A673 (cell line): ENCODE measurements at regions of chr3 and their contacts with region 1.

Region 1: GRCh38 chr3:179322286-179323196 is at the start of gene ZNF639:
- DNase-seq: peak; percentile 94
- H3K4me3 ChIP-seq: peak within 1 kb of the TSS; percentile 95
- H3K27ac ChIP-seq: peak within 1 kb of the TSS; percentile 95
- H3K4me1 ChIP-seq: peaks cover 11% of the 10 kb centered on the region
- H3K27me3 ChIP-seq: no peaks in the 10 kb centered on the region
- CTCF ChIP-seq: peak; percentile 67
- total RNA-seq, gene ZNF639: 46.8 and 47.4 TPM in 2 replicates

Region 2: GRCh38 chr3:178436773-178437172 is 885.8 kb before region 1 on chr3:
- CTCF ChIA-PET with region 1: no interaction called
- POLR2A ChIA-PET with region 1: interaction called, 3 read pairs
- intact Hi-C with region 1: loop called (anchors 5 kb)
- DNase-seq: peak; percentile 65
- H3K4me3 ChIP-seq: no peak overlapping the region
- H3K27ac ChIP-seq: no peak overlapping the region
- H3K4me1 ChIP-seq: peaks cover 24% of the 10 kb centered on the region
- H3K27me3 ChIP-seq: no peaks in the 10 kb centered on the region
- CTCF ChIP-seq: peak; percentile 77

Region 3: GRCh38 chr3:178966299-178967176 is 356.0 kb before region 1 on chr3:
- CTCF ChIA-PET with region 1: no interaction called
- POLR2A ChIA-PET with region 1: no interaction called
- intact Hi-C with region 1: loop called (anchors 1 kb)
- DNase-seq: peak; percentile 89
- H3K4me3 ChIP-seq: peak overlapping the region; percentile 17
- H3K27ac ChIP-seq: peak overlapping the region; percentile 89
- H3K4me1 ChIP-seq: peaks cover 32% of the 10 kb centered on the region
- H3K27me3 ChIP-seq: no peaks in the 10 kb centered on the region
- CTCF ChIP-seq: peak; percentile 75

Region 4: DNA sequence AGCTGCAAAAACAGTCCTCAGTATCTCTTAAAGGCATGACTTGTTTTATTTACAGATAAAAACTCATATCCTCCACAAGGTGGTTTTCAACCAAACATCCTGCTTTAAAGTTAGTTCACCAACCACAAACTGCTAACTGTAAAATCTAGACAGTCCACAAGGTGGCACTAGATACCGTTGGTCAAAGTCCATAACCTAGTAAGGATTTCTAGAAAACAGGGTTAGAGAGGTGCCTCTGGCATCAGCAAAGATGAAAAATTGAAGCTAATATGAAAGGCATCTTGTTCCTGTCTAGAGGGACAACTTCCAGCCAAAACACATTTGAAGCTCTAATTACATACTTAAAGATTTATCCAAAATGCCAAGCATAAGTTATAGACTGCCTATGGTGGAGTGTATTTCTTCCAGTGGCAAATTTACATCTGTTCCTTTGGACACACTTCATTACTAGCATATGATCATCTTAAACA is 307.0 kb before region 1 on chr3:
- CTCF ChIA-PET with region 1: interaction called, 4 read pairs
- POLR2A ChIA-PET with region 1: no interaction called
- intact Hi-C with region 1: loop called (anchors 1 kb)
- DNase-seq: peak; percentile 86
- H3K4me3 ChIP-seq: no peak overlapping the region
- H3K27ac ChIP-seq: no peak overlapping the region
- H3K4me1 ChIP-seq: peaks cover 29% of the 10 kb centered on the region
- H3K27me3 ChIP-seq: no peaks in the 10 kb centered on the region
- CTCF ChIP-seq: peak; percentile 87

Region 5: GRCh38 chr3:179108086-179108485 is 214.5 kb before region 1 on chr3:
- CTCF ChIA-PET with region 1: no interaction called
- POLR2A ChIA-PET with region 1: no interaction called
- intact Hi-C with region 1: loop called (anchors 2 kb)
- DNase-seq: no peak
- H3K4me3 ChIP-seq: no peak overlapping the region
- H3K27ac ChIP-seq: no peak overlapping the region
- H3K4me1 ChIP-seq: no peaks in the 10 kb centered on the region
- H3K27me3 ChIP-seq: no peaks in the 10 kb centered on the region
- CTCF ChIP-seq: no peak

Region 6: DNA sequence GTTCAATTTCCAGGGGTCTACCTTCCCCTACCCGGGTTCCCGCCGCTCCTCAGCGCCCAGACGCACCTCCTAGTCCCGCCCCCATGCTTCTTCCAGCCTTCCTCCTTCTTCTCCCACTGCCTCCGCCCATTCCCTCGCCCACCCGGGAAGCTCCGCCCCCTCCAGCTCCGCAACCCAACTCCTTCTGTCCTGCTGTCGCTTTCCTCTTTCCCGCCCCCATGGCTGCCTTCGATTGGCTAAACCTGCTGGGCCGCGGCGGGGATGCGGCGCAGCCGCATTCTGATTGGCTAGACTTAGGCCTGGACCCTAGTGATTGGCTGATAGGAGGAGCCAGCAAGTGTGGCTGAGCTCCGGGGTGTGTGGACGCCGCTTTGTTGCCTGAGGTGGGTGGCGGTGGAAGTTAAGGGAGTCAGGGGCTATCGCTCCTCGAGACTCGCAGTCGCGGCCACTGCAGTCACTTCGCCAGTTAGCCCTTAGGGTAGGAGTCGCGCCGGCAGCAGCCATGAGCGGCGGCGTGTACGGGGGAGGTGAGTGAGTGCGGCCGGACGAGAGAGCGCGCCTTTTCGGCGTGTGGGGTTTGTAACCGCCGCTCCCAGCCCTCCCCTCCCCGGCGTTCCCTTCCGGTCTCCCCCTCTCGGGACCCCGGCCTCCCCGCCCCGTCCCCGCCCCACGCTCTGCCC is 240.2 kb after region 1 on chr3 and contains the start of gene ACTL6A:
- CTCF ChIA-PET with region 1: no interaction called
- POLR2A ChIA-PET with region 1: no interaction called
- intact Hi-C with region 1: loop called (anchors 1 kb)
- DNase-seq: peak; percentile 100
- H3K4me3 ChIP-seq: peak within 1 kb of the TSS; percentile 90
- H3K27ac ChIP-seq: peak within 1 kb of the TSS; percentile 93
- H3K4me1 ChIP-seq: peaks cover 14% of the 10 kb centered on the region
- H3K27me3 ChIP-seq: no peaks in the 10 kb centered on the region
- CTCF ChIP-seq: no peak
- total RNA-seq, gene ACTL6A: 140 and 153 TPM in 2 replicates